ENCODE measurements at regions of chr10 and their contacts with region 1.

Region 1: DNA sequence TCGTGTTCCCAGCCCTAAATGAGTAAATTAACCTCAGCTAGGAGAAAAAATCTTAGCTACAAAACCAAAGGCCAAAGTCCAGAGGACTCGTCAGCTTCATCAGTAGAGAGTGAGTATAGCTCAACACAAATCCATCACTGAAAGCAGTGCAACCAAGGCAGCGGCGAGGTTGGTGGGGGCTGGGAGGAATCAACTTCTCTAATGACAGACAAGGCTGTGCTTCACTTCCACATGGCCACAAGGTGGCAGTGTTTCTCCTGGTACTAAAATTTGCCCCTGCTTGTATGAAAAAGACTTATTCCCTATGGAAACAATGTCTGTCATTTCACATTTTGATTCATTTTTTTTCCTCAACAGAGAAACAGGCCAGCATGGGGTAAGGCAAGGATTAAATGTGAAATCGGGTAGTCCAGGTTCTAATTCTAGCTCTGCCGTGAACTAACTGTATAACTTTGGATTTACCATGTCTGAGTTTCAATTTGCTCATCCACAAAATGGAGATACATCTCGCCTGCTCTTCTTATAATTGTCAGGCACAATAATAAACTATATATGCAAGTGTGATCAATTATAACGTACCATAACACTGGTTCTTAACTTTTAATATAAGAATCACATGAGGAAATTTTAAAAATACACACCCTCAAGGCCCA is 39.3 kb downstream of the FAS start:
- DNase-seq: peak; percentile 35 to 89 (median 78)
- H3K4me3 ChIP-seq: peak overlapping the region in 4 of 59 donors; percentile 5 to 35 (median 26)
- H3K27ac ChIP-seq: peak overlapping the region in 5 of 59 donors; percentile 3 to 23 (median 11)
- H3K27me3 ChIP-seq: no peaks in the 10 kb centered on the region
- CTCF ChIP-seq: peak; percentile 86 to 99 (median 96)

Region 2: DNA sequence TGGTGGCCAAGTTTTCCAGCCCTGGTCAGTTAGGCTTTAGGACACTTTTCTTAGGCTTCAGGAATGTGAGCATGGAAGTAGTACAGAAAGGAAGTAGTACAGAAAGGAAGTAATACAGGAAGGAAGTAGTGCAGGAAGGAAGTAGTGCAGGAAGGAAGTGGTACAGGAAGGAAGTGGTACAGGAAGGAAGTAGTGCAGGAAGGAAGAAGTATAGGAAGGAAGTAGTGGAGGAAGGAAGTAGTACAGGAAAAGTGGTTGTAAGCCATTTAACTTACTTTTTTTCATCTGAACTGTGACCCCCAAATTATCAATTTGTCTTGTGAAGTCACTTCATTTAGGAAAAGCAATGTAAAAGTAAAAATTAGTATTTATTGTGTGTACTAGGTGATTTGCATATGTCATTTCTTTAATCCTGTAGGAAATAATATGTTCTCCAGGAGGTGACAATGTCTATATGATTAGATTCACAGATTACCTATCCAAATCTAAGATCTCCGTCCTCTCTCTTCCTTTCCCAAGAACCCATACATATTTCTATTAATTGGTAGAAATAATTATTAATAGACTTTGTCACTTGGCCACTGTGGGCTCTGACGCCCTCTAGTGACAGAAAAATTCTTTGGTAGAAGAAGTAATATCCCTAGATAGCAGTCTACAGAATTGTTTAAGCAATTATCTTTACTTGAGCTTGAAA is 43.2 kb before region 1 on chr10:
- intact Hi-C with region 1: no loop called
- DNase-seq: peak in 1 of 10 donors; percentile 33
- H3K4me3 ChIP-seq: no peak overlapping the region
- H3K27ac ChIP-seq: peak overlapping the region in 1 of 59 donors; percentile 15
- H3K27me3 ChIP-seq: no peaks in the 10 kb centered on the region
- CTCF ChIP-seq: peak; percentile 57 to 90 (median 78)

Region 3: GRCh38 chr10:89207181-89207800 is 177.4 kb after region 1 on chr10 and contains the start of gene CH25H:
- intact Hi-C with region 1: loop called in 1 of 2 experiments (anchors 2 kb)
- DNase-seq: peak; percentile 62 to 91 (median 88)
- H3K4me3 ChIP-seq: peak within 1 kb of the TSS; percentile 43 to 94 (median 69)
- H3K27ac ChIP-seq: peak within 1 kb of the TSS; percentile 4 to 91 (median 79)
- H3K27me3 ChIP-seq: no peaks in the 10 kb centered on the region
- CTCF ChIP-seq: peak in 7 of 56 donors; percentile 2 to 24 (median 16)
- total RNA-seq, gene CH25H: 0.35 to 8.8 (median 2.3) TPM